ENCODE measurements at regions of chr2 and their contacts with region 1.

Region 1: DNA sequence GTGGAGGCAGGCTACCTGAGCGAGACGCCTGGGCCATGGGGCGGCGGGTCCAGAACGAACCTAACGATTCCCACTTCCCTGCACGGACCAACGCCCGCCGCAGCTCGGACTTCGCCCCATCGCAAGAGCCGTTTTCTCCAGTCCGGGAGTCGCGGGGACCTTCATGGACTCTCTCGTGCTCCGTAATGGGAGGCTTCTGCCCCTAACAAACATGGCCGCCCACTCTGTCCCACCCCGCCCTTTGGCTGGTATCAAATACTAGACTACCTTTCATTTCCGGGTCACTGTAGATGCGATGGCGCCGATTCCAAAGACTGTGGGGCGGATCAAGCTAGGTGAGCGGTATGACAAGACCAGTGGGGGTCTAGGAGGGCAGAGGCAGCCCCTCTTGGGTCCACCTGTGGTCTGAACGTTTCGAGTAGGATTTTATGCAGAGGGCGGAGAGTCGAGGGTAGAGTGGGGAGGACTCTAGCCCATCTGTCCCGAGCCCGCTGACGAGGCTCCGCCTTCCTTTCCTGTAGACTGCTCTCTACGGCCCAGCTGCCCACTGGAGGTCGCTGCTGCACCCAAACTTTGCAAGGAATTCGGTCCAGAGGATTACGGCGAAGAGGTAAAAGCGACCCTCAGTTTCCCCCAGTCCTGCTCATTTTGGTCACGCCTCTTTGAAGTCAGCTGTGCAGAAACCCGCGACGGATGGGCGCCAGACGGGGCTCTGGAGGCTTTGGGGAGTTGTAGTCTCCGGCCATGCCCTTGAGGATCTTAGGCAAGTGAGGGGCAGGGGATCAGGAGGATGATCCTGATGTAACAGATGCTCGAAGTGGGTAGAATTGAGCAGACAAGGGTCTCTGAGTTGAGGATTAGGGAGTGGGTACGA is at the starts of genes CCDC142 and TTC31:
- DNase-seq: peak; percentile 96
- ATAC-seq: peak; percentile 95
- H3K4me3 Mint-ChIP-seq: peak within 1 kb of the TSS; percentile 90
- H3K27ac Mint-ChIP-seq: peak within 1 kb of the TSS; percentile 99
- H3K4me1 Mint-ChIP-seq: peaks cover 31% of the 10 kb centered on the region
- H3K27me3 Mint-ChIP-seq: no peaks in the 10 kb centered on the region
- total RNA-seq, gene CCDC142: 9.7 to 13.2 TPM
- total RNA-seq, gene TTC31: 24.0 to 24.6 TPM

Region 2: DNA sequence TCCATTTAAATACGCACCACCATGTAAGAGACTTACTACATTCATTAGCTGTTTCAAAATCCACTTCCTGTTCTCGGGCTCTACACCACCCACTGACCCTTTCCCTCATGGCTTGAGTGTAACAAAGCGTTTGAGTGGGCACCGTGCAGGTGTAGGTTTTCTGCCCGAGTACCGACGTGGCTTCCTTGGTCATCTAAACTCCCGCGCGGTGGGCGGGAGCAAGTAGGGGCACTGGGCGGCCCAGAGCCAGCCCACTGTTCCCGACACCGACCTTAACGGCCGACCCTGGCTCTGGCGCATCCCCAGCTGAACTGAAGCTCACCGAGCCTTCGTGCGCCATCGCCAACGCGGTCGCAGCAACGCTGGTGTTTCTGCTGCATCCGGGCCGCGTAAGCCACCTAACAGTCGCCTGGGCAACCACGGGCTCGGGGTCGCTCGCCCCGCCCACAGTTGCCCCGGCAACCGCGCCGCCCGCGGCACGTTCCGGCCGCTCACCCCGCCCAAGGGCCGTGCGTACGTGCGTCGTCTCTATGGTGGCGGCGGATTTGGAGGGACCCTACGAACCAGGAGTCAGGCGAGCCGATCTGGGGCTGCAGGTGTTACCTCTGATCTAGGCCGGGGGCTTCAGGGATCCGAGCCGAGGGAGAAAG is 61.7 kb before region 1 on chr2 and contains the starts of genes C2orf81 and WDR54:
- CTCF ChIA-PET with region 1: interaction called, 3 read pairs
- POLR2A ChIA-PET with region 1: no interaction called
- intact Hi-C with region 1: loop called (anchors 1 to 2 kb)
- DNase-seq: peak; percentile 97
- ATAC-seq: peak; percentile 92
- H3K4me3 Mint-ChIP-seq: peak within 1 kb of the TSS; percentile 91
- H3K27ac Mint-ChIP-seq: peak within 1 kb of the TSS; percentile 98
- H3K4me1 Mint-ChIP-seq: peaks cover 34% of the 10 kb centered on the region
- H3K27me3 Mint-ChIP-seq: no peaks in the 10 kb centered on the region
- total RNA-seq, gene C2orf81: 4.5 to 4.9 TPM
- total RNA-seq, gene WDR54: 103 to 119 TPM

Region 3: GRCh38 chr2:74498500-74499266 is 15.6 kb after region 1 on chr2:
- CTCF ChIA-PET with region 1: interaction called, 17 read pairs
- POLR2A ChIA-PET with region 1: no interaction called
- intact Hi-C with region 1: loop called in 1 of 2 experiments (anchors 1 kb)
- DNase-seq: peak; percentile 49
- ATAC-seq: peak; percentile 63
- H3K4me3 Mint-ChIP-seq: peak overlapping the region; percentile 77
- H3K27ac Mint-ChIP-seq: peak overlapping the region; percentile 15
- H3K4me1 Mint-ChIP-seq: peaks cover 31% of the 10 kb centered on the region
- H3K27me3 Mint-ChIP-seq: peaks cover 50% of the 10 kb centered on the region

Region 4: DNA sequence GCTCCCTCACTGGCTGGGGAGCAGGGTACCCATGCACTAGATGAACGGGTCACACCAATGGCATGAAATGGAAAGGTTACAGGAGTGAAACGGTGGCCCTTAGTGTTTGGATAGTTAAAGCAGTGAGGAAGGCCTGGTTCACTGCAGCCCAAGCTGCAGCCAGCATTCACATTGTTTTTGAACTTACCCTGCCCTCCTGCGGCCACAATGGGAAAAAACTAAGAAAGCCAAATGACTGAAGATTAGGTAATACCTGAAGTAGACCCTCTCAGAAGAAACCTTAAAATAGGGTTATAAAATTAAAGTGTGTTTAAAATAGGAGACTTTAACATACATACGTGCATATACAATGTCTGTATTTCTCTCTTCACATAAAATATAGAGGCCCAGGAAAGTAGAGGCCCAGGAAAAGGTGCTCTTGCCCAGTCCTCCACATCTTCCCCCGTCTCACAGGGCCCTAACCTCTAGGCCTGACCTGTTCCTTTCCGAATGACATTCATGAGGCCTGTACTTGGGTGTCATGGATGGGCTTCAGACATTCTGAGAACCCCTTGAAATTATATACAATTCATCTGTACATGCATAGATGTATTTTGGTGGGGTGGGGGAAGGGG is 104.7 kb after region 1 on chr2:
- CTCF ChIA-PET with region 1: interaction called, 57 read pairs
- POLR2A ChIA-PET with region 1: no interaction called
- intact Hi-C with region 1: loop called (anchors 1 kb)
- DNase-seq: peak; percentile 75
- ATAC-seq: peak; percentile 62
- H3K4me3 Mint-ChIP-seq: no peak overlapping the region
- H3K27ac Mint-ChIP-seq: no peak overlapping the region
- H3K4me1 Mint-ChIP-seq: peaks cover 26% of the 10 kb centered on the region
- H3K27me3 Mint-ChIP-seq: peaks cover 3% of the 10 kb centered on the region

Region 5: GRCh38 chr2:74958274-74959105 is 475.5 kb after region 1 on chr2 and contains the start of gene POLE4:
- CTCF ChIA-PET with region 1: no interaction called
- POLR2A ChIA-PET with region 1: no interaction called
- intact Hi-C with region 1: loop called in 1 of 2 experiments (anchors 2 kb)
- DNase-seq: peak; percentile 97
- ATAC-seq: peak; percentile 92
- H3K4me3 Mint-ChIP-seq: peak within 1 kb of the TSS; percentile 68
- H3K27ac Mint-ChIP-seq: peak within 1 kb of the TSS; percentile 88
- H3K4me1 Mint-ChIP-seq: peaks cover 72% of the 10 kb centered on the region
- H3K27me3 Mint-ChIP-seq: no peaks in the 10 kb centered on the region
- total RNA-seq, gene POLE4: 29.3 to 44.0 TPM

Region 6: GRCh38 chr2:75108937-75109482 is 626.0 kb after region 1 on chr2:
- CTCF ChIA-PET with region 1: no interaction called
- POLR2A ChIA-PET with region 1: no interaction called
- intact Hi-C with region 1: no loop called
- DNase-seq: no peak
- ATAC-seq: no peak
- H3K4me3 Mint-ChIP-seq: no peak overlapping the region
- H3K27ac Mint-ChIP-seq: no peak overlapping the region
- H3K4me1 Mint-ChIP-seq: no peaks in the 10 kb centered on the region
- H3K27me3 Mint-ChIP-seq: peaks cover 2% of the 10 kb centered on the region